A549 (cell line): ENCODE measurements at regions of chr7 and their contacts with region 1.

Region 1: GRCh38 chr7:151315038-151315655 is 26.5 kb upstream of the NUB1 start:
- DNase-seq: peak; percentile 70 to 78
- ATAC-seq: peak; percentile 82 to 93; a peak in 5 of 6 replicates
- H3K4me3 ChIP-seq: no peak overlapping the region
- H3K27ac ChIP-seq: no peak overlapping the region
- H3K4me1 ChIP-seq: 0 out of 3 replicates have a peak, but pooled peaks cover 3% of the 10 kb centered on the region
- CTCF ChIP-seq: peak; percentile 93
- EP300 ChIP-seq: no peak
- POLR2A ChIP-seq: no peak
- RAD21 ChIP-seq: peak; percentile 84 to 90

Region 2: GRCh38 chr7:151296202-151296992 is 18.8 kb before region 1 on chr7:
- CTCF ChIA-PET with region 1: interaction called, 11 read pairs
- POLR2A ChIA-PET with region 1: no interaction called
- DNase-seq: no peak
- ATAC-seq: no peak
- H3K4me3 ChIP-seq: no peak overlapping the region
- H3K27ac ChIP-seq: no peak overlapping the region
- H3K4me1 ChIP-seq: no peaks in the 10 kb centered on the region
- CTCF ChIP-seq: no peak
- EP300 ChIP-seq: no peak
- POLR2A ChIP-seq: no peak
- RAD21 ChIP-seq: no peak

Region 3: DNA sequence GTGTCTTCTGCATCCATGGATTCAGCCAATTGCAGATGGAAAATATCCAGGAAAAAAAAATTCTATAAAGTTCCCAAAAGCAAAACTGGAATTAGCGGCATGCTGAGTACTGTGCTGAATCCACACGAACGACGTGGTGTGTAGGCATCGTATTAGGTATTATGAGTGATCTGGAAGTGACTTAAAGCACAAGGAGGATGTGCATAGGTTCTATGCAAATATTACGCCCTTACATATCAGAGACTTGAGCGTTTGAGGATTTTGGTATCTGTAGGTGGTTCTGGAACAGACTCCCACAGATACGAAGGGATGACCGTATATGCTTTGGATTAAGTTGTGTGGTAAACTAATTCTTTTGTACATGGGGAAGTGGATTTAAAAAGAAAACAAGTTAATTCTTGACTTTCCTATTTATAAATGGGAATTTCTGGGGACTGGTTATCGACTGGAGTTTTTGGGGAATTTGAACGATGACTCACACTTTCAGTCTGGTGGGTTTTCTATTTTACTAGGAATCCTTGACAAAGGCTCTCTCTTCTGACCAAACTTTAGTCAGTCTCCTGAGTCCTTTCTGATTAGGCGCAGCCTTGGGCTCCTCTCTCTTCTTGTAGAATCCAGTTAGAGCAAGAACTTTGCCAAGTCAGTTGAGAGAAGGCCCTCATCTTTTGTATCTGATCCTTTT is 21.0 kb after region 1 on chr7:
- CTCF ChIA-PET with region 1: interaction called, 50 read pairs
- POLR2A ChIA-PET with region 1: interaction called, 5 read pairs
- DNase-seq: no peak
- ATAC-seq: no peak
- H3K4me3 ChIP-seq: no peak overlapping the region
- H3K27ac ChIP-seq: no peak overlapping the region
- H3K4me1 ChIP-seq: no peaks in the 10 kb centered on the region
- CTCF ChIP-seq: no peak
- EP300 ChIP-seq: no peak
- POLR2A ChIP-seq: no peak
- RAD21 ChIP-seq: no peak

Region 4: DNA sequence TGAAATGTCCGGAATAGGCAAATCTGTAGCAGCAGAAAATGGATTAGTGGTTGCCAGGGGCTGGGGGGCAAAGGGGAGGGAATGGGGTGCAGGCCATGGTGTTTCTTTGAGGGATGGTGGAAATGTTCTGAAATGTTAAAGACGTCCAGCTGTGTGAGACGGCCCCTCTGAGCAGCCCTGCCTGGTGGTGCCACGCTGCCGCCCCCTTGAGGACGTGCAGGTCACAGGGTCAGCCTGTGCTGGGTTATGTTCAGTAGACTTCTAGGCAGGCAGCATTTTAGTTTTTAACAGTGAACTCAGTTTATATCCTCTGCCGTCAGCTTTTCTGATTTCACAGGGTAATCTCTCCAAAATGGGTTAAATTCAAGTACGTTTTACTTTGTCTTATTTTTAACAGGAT is 35.9 kb after region 1 on chr7:
- CTCF ChIA-PET with region 1: interaction called, 234 read pairs
- POLR2A ChIA-PET with region 1: no interaction called
- DNase-seq: peak; percentile 32 to 35
- ATAC-seq: peak; percentile 80 to 89; a peak in 4 of 6 replicates
- H3K4me3 ChIP-seq: no peak overlapping the region
- H3K27ac ChIP-seq: no peak overlapping the region
- H3K4me1 ChIP-seq: peaks cover 26% of the 10 kb centered on the region
- CTCF ChIP-seq: peak; percentile 35
- EP300 ChIP-seq: no peak
- POLR2A ChIP-seq: no peak
- RAD21 ChIP-seq: peak in 1 of 2 experiments; percentile 30; a peak in 2 of 5 replicates

Region 5: DNA sequence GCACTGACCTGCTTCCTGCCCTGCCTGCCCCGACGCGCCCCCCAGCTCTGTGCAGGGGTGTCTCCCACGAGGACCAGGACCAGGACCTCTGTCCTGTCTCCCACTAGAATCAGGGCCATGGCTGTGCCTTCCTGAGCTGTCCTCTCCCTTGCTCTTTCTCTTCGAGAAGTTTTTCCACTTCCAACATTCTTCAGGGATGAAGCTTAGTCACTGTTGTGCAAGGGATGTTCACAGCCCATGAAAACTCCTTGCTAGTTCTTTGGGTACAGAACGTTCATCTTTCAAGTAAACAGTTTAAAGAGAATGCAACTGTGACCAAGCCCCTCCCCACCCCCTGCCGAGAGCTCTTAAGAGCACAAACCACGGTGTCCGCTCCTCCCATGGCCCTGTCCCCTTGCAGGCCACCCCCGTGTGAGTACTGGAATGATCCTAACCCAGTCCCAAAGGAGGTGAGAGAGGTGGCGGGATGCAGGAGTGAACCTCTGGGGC is 365.6 kb after region 1 on chr7:
- CTCF ChIA-PET with region 1: no interaction called
- POLR2A ChIA-PET with region 1: no interaction called
- DNase-seq: no peak
- ATAC-seq: no peak
- H3K4me3 ChIP-seq: no peak overlapping the region
- H3K27ac ChIP-seq: peak overlapping the region; percentile 54 to 61; a peak in 4 of 6 replicates
- H3K4me1 ChIP-seq: peaks cover 3% of the 10 kb centered on the region; the same call in 1 of the 3 replicates
- CTCF ChIP-seq: no peak
- EP300 ChIP-seq: no peak
- POLR2A ChIP-seq: no peak
- RAD21 ChIP-seq: no peak